ENCODE measurements at regions of chr7 and their contacts with region 1.

Region 1: GRCh38 chr7:145036604-145037405 is 201.0 kb upstream of the TPK1 start:
- DNase-seq: no peak
- H3K4me3 Mint-ChIP-seq: no peak overlapping the region
- H3K27ac Mint-ChIP-seq: no peak overlapping the region
- H3K4me1 Mint-ChIP-seq: no peaks in the 10 kb centered on the region
- H3K27me3 Mint-ChIP-seq: peaks cover 1% of the 10 kb centered on the region

Region 2: DNA sequence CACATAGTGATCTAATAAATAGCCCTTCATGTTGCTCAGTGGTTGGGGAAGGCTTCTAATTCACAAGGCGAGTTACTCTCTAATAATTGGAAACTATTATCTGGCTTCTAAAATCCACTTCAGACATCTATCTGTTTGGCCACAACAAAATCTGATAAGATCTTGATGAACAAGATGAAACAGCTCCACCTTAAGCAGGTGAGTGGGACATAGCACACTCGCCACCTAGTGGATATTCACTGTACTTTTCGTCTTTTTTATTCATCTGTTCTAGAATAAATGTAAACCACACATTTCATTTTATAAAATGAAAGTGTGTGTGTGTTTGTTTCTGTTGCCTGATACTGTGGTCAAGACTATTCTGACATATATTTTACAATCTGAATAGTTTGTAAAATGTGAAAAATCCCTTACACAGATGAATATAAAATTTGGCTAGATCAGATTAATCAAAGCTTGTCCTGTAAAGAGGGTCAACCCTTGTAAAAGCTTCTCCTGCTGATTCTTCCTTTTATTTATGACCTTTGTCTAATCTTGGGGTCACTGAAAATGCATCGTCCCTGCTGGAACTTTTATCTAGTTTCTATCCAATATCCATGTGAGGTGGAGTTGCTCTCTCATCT is 1053.3 kb after region 1 on chr7:
- intact Hi-C with region 1: loop called (anchors 5 kb)
- DNase-seq: no peak
- H3K4me3 Mint-ChIP-seq: no peak overlapping the region
- H3K27ac Mint-ChIP-seq: no peak overlapping the region
- H3K4me1 Mint-ChIP-seq: no peaks in the 10 kb centered on the region
- H3K27me3 Mint-ChIP-seq: no peaks in the 10 kb centered on the region